HepG2 (cell line): ENCODE measurements at regions of chr1 and their contacts with region 1.

Region 1: GRCh38 chr1:1374929-1375662 is at the start of gene AURKAIP1:
- DNase-seq: peak; percentile 99
- ATAC-seq: peak; percentile 90
- H3K4me3 ChIP-seq: peak within 1 kb of the TSS; percentile 75 to 99 (median 90)
- H3K27ac ChIP-seq: peak within 1 kb of the TSS; percentile 79
- H3K4me1 ChIP-seq: peaks cover 37% of the 10 kb centered on the region
- H3K27me3 ChIP-seq: no peaks in the 10 kb centered on the region; a peak in 1 of 5 replicates
- CTCF ChIP-seq: peak; percentile 77
- EP300 ChIP-seq: peak in 1 of 2 experiments; percentile 44; a peak in 2 of 4 replicates
- POLR2A ChIP-seq: peak; percentile 52 to 78
- RAD21 ChIP-seq: peak; percentile 71
- total RNA-seq, gene AURKAIP1: 161 and 175 TPM in 2 replicates

Region 2: DNA sequence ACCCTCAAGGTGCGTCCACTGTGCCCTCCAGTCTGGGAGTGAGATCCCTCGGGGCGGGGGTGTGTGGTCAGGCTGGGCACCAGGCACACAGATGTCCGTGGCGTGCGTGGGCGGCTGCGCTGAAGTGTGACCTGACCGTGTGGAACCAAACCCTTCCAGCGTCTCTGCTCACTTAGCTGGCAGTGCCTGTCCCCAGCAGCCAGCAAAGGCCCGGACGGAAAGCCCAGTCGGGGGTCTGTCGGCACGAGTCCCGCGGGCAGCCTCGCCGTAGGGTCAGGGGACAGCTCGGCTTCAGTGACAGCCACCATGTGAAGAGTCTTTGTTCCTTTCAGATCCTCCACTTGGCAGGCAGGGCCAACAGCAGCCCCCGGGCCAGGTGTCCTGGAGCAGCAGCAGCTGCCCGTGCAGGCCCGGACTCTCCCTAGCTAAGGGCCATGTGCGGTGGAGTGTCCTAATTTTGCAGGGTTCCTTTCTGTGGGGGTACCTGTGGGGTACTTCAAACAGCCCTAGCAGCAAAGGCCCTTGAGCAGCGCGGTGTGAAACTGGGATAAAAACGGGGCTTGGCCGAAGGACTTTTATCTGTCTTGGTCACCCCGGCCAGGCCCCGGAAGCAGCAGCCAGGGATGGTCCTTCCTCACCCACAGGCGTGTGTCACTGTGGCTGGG is 189.9 kb before region 1 on chr1:
- CTCF ChIA-PET with region 1: no interaction called
- POLR2A ChIA-PET with region 1: no interaction called
- in situ Hi-C with region 1: no loop called
- intact Hi-C with region 1: no loop called
- DNase-seq: no peak
- ATAC-seq: peak; percentile 56
- H3K4me3 ChIP-seq: peak overlapping the region in 2 of 3 experiments; percentile 32 to 46; a peak in 2 of 6 replicates
- H3K27ac ChIP-seq: no peak overlapping the region
- H3K4me1 ChIP-seq: peaks cover 14% of the 10 kb centered on the region
- H3K27me3 ChIP-seq: peaks cover 4 to 56% of the 10 kb centered on the region in 2 experiments; a peak in 4 of 5 replicates
- CTCF ChIP-seq: no peak
- EP300 ChIP-seq: no peak
- POLR2A ChIP-seq: no peak
- RAD21 ChIP-seq: no peak

Region 3: GRCh38 chr1:1225238-1225845 is 149.8 kb before region 1 on chr1:
- CTCF ChIA-PET with region 1: no interaction called
- POLR2A ChIA-PET with region 1: no interaction called
- in situ Hi-C with region 1: no loop called
- intact Hi-C with region 1: no loop called
- DNase-seq: no peak
- ATAC-seq: no peak
- H3K4me3 ChIP-seq: no peak overlapping the region
- H3K27ac ChIP-seq: no peak overlapping the region
- H3K4me1 ChIP-seq: peaks cover 11% of the 10 kb centered on the region
- H3K27me3 ChIP-seq: no peaks in the 10 kb centered on the region
- CTCF ChIP-seq: no peak
- EP300 ChIP-seq: no peak
- POLR2A ChIP-seq: no peak
- RAD21 ChIP-seq: no peak

Region 4: GRCh38 chr1:1349256-1350012 is 25.7 kb before region 1 on chr1 and contains the start of gene DVL1:
- CTCF ChIA-PET with region 1: interaction called, 13 read pairs
- POLR2A ChIA-PET with region 1: interaction called, 20 read pairs
- in situ Hi-C with region 1: no loop called
- intact Hi-C with region 1: loop called (anchors 1 kb)
- DNase-seq: no peak
- ATAC-seq: 0 out of 3 replicates have a peak, but pooled peaks have one; percentile 3
- H3K4me3 ChIP-seq: peak within 1 kb of the TSS; percentile 79 to 90 (median 85)
- H3K27ac ChIP-seq: peak within 1 kb of the TSS; percentile 82
- H3K4me1 ChIP-seq: peaks cover 49% of the 10 kb centered on the region
- H3K27me3 ChIP-seq: no peaks in the 10 kb centered on the region
- CTCF ChIP-seq: peak; percentile 78
- EP300 ChIP-seq: no peak
- POLR2A ChIP-seq: no peak
- RAD21 ChIP-seq: peak; percentile 58
- total RNA-seq, gene DVL1: 42.8 and 60.4 TPM in 2 replicates

Region 5: GRCh38 chr1:1358433-1359261 is 16.4 kb before region 1 on chr1 and contains the start of gene MXRA8:
- CTCF ChIA-PET with region 1: no interaction called
- POLR2A ChIA-PET with region 1: interaction called, 17 read pairs
- in situ Hi-C with region 1: no loop called
- intact Hi-C with region 1: no loop called
- DNase-seq: peak; percentile 79
- ATAC-seq: peak; percentile 28
- H3K4me3 ChIP-seq: peak within 1 kb of the TSS; percentile 69 to 74 (median 71)
- H3K27ac ChIP-seq: peak within 1 kb of the TSS; percentile 88
- H3K4me1 ChIP-seq: peaks cover 57% of the 10 kb centered on the region
- H3K27me3 ChIP-seq: no peaks in the 10 kb centered on the region
- CTCF ChIP-seq: 0 out of 2 replicates have a peak, but pooled peaks have one; percentile 4
- EP300 ChIP-seq: no peak
- POLR2A ChIP-seq: no peak
- RAD21 ChIP-seq: no peak
- total RNA-seq, gene MXRA8: 5.4 and 19.8 TPM in 2 replicates

Region 6: DNA sequence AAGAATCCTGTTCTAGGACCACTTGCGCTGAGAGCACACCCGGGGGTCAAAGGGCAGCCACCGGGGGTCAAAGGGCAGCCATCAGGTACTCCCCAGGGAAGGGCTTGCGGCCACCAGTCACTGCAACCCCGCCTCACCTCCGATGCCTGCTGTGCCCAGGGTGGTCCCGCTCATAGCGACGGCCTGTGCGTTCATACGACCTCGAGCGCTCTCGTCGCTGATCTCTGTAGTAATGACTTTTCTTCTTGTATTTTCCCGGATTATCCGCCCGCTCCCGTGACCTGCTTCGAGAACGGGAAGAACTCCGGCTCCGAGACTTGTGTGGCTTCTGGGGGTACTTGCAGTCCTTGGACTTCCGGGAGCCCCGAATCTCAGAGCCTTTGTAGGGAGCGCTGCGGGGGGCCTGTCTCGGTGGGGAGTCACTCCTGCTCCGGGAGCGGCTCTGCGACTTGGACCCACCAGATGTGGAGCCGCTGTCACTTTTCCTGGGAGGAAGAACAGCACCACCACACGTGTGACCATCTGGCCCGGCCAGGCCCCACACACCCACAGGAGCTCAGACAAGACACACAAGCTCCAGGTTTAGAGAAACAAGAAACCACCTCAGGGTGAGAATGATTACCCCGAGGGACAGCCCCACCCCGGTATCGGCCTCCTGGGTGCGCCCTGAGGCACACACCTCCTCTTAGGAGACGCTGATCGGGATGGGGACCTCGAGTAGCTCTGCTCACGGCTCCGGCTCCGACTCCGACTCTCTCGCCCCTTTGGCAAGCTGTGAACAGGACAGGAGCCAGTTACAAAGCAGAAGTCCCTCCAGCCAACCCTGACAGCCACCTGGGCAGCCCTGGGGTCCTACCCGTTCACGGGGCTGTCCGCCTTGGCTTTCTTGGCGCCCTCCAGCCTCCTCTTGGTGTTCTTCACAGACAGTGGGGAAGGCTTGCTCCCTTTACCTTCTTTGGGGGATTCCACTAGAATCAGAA is 12.3 kb after region 1 on chr1:
- CTCF ChIA-PET with region 1: no interaction called
- POLR2A ChIA-PET with region 1: interaction called, 13 read pairs
- in situ Hi-C with region 1: no loop called
- intact Hi-C with region 1: no loop called
- DNase-seq: no peak
- ATAC-seq: no peak
- H3K4me3 ChIP-seq: no peak overlapping the region
- H3K27ac ChIP-seq: no peak overlapping the region
- H3K4me1 ChIP-seq: peaks cover 23% of the 10 kb centered on the region
- H3K27me3 ChIP-seq: no peaks in the 10 kb centered on the region
- CTCF ChIP-seq: no peak
- EP300 ChIP-seq: no peak
- POLR2A ChIP-seq: no peak
- RAD21 ChIP-seq: no peak

Region 7: DNA sequence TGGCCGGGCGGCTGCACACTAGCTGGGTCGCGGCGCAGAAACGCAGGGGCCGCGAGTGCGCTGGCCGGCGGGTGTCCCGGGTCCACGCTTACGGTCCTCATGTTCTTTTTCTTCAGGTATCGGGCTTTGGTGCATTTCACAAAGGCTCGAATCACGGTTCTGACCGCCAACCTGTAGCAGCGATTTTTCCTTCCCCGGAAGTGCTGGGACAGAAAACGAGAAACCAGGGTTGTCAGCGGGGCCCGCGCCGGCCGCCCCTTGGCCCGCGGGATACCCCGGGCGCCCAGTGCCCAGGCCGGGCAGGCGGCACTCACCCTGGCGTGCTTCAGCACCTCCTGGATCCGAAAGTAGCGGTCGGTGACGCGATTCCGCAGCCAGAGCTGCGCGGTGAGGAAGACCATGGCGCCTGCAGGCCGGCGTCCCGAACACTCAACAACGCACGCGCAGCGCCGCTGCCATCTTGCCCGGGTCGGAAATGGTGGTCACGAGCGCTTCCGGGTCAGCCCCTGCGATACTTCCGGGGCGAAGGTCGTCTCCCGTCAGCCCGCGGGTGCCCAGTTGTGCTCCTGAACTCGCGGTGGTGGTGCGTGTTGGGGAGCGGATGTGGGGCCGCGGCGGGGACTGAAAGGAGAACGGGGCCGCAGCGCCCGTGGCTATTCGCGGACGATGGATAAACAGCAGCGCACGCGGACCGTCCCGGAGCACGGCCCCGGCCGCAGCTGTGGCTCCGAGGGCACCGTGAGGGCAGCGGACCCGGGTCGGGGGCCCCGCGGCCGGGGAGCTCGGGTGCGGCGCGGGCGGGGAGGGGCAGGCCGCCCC is 31.9 kb after region 1 on chr1 and contains the start of gene MRPL20:
- CTCF ChIA-PET with region 1: no interaction called
- POLR2A ChIA-PET with region 1: interaction called, 32 read pairs
- in situ Hi-C with region 1: no loop called
- intact Hi-C with region 1: no loop called
- DNase-seq: peak; percentile 87
- ATAC-seq: peak; percentile 93
- H3K4me3 ChIP-seq: peak within 1 kb of the TSS; percentile 81 to 89 (median 87)
- H3K27ac ChIP-seq: peak within 1 kb of the TSS; percentile 91
- H3K4me1 ChIP-seq: peaks cover 50% of the 10 kb centered on the region
- H3K27me3 ChIP-seq: no peaks in the 10 kb centered on the region
- CTCF ChIP-seq: peak; percentile 28; the same call in 1 of the 2 replicates
- EP300 ChIP-seq: peak in 1 of 2 experiments; percentile 40; a peak in 1 of 4 replicates
- POLR2A ChIP-seq: peak in 1 of 2 experiments; percentile 87; a peak in 2 of 4 replicates
- RAD21 ChIP-seq: peak; percentile 42; the same call in 1 of the 2 replicates
- total RNA-seq, gene MRPL20: 127 and 175 TPM in 2 replicates

Region 8: DNA sequence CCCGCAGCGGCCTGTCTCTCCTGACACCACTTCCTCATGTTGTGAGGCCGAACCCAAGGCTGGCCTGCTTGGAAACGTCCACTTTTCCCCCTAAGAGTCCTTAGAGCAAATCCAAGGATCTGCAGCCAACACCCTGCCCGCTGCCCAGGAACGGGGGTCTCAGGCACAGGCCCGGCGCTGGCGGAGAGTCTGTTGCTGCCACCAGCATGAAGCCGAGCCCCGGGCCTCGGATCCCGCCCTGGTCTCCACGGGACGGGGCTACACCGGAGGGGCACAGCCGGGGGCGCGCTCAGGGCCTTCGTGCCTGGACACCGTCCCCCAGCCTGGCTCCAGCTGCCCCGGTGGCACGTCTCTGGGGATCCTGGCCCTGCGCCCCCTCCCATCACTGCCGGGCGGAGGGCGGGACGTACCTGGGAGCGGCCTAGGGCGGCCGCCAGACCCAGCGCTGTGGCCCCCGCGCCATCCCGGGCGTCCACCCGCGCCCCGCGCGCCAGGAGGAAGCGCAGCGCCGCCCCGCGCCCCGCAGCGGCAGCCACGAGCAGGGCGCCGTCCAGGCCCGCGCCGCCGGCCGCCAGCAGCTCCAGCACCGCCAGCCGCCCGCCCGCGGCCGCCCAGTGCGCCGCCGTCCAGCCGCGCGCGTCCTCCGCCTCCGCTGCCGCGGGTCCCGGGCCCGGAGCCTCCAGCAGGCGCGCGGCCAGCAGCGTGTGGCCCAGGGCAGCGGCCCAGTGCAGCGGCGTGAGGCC is 44.7 kb after region 1 on chr1:
- CTCF ChIA-PET with region 1: no interaction called
- POLR2A ChIA-PET with region 1: interaction called, 11 read pairs
- in situ Hi-C with region 1: no loop called
- intact Hi-C with region 1: no loop called
- DNase-seq: no peak
- ATAC-seq: peak; percentile 12; the same call in 1 of the 3 replicates
- H3K4me3 ChIP-seq: peak overlapping the region; percentile 37 to 74 (median 70); a peak in 5 of 6 replicates
- H3K27ac ChIP-seq: peak overlapping the region; percentile 44
- H3K4me1 ChIP-seq: peaks cover 67% of the 10 kb centered on the region
- H3K27me3 ChIP-seq: no peaks in the 10 kb centered on the region; a peak in 1 of 5 replicates
- CTCF ChIP-seq: no peak
- EP300 ChIP-seq: no peak
- POLR2A ChIP-seq: no peak
- RAD21 ChIP-seq: no peak

Region 9: DNA sequence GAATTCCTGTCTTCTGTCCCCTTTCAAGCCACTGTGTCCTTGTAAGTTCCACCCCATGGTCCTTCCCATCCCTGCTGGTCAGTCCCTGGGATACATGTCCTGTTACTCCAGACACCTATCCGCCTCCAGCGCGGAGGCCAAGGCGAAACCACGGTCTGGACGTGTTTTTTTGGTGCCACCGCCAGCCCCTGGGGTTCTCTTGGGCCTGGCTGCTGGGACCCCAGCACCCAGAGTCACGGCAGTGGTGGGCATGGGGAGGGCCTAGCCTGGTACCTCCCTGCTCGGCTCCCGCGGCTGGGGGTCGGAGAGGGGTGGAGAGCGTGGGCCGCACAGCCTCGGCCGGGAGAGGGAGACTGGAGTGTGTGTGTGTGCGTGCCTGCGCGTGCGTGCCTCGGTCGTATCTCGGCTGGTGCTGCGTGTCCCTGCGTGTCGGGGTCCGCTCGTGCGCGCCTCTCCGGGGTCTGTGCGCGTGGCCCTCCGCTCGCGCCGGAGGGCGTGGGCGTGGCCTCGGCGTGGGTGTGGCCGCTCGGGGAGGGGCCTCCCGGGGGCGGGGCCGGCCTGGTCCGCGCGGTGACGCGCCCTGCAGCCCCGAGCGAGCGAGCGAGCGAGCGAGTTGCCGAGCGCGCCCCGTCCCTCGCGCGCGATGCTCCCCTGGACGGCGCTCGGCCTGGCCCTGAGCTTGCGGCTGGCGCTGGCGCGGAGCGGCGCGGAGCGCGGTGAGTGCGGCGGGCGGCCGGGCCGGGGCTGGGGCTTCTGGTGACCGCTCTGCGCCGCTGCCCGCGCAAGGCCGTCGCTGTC is 60.2 kb after region 1 on chr1 and contains the start of gene VWA1:
- CTCF ChIA-PET with region 1: no interaction called
- POLR2A ChIA-PET with region 1: interaction called, 22 read pairs
- in situ Hi-C with region 1: no loop called
- intact Hi-C with region 1: no loop called
- DNase-seq: no peak
- ATAC-seq: no peak
- H3K4me3 ChIP-seq: peak within 1 kb of the TSS; percentile 72 to 88 (median 84)
- H3K27ac ChIP-seq: peak within 1 kb of the TSS; percentile 94
- H3K4me1 ChIP-seq: peaks cover 53% of the 10 kb centered on the region
- H3K27me3 ChIP-seq: no peaks in the 10 kb centered on the region
- CTCF ChIP-seq: peak; percentile 14; the same call in 1 of the 2 replicates
- EP300 ChIP-seq: no peak
- POLR2A ChIP-seq: no peak; a peak in 1 of 4 replicates
- RAD21 ChIP-seq: no peak
- total RNA-seq, gene VWA1: 25.1 and 57.5 TPM in 2 replicates